ENCODE measurements at regions of chr6 and their contacts with region 1.

Region 1: DNA sequence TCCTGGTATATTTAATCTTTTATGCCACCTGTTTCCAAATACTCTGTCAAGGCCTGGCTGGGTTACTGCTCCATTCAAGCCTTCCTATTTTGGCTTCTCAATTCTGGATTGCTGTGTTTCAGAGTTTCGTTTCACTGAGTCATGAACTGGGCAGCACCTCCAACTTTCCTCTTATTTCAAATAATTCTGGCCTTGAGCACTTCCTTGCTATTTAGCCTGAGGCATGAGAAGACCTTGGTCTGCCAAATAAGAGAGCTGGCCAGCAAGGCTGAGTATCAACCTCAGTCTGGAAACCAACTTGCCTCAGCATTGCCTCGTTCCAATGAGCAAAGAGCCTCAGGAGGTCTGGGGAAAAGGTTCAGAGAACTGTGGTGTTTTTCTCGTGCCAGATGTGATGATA is 66.6 kb downstream of the TNFAIP3 start:
- DNase-seq: no peak
- H3K4me3 ChIP-seq: no peak overlapping the region
- H3K27ac ChIP-seq: no peak overlapping the region
- H3K4me1 ChIP-seq: no peaks in the 10 kb centered on the region
- H3K27me3 ChIP-seq: no peaks in the 10 kb centered on the region
- CTCF ChIP-seq: no peak
- POLR2A ChIP-seq: no peak

Region 2: DNA sequence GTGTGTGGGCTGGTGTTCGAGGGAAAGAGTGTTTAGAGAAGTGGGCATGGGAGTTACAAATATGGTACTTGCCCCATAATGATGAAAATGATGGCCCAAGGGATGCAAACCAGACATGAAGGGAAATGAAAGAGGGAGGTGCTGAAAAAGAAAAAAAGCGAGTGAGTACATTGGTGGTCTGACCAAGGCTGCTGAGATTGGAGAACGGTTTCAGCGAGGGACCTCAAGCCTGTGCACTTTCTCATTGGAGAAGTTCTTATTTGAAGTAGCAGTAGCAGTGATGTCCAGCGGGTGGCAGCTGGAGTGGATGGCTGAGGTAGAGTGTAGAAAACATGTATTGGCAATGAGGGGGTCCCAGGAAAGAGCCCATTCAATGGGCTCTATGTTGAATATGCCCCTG is 11.9 kb before region 1 on chr6:
- CTCF ChIA-PET with region 1: interaction called, 10 read pairs
- POLR2A ChIA-PET with region 1: no interaction called
- dilution Hi-C with region 1: no loop called
- intact Hi-C with region 1: loop called (anchors 2 kb)
- DNase-seq: no peak
- H3K4me3 ChIP-seq: no peak overlapping the region
- H3K27ac ChIP-seq: no peak overlapping the region
- H3K4me1 ChIP-seq: no peaks in the 10 kb centered on the region
- H3K27me3 ChIP-seq: no peaks in the 10 kb centered on the region
- CTCF ChIP-seq: no peak
- POLR2A ChIP-seq: no peak